Activated T-helper 1 cell treated with anti-CD3 and anti-CD28 coated beads, Interleukin-12 subunit alpha, Interleukin-12 subunit beta, Interleukin-2, Interleukin-4 antibody, amounts not matched to agents 30 ng/mL and 10 ng/mL and 1 ng/mL, durations not matched to agents 14 hours and 24 hours and 36 hours (primary cell): ENCODE measurements at regions of chr15 and their contacts with region 1.

Region 1: DNA sequence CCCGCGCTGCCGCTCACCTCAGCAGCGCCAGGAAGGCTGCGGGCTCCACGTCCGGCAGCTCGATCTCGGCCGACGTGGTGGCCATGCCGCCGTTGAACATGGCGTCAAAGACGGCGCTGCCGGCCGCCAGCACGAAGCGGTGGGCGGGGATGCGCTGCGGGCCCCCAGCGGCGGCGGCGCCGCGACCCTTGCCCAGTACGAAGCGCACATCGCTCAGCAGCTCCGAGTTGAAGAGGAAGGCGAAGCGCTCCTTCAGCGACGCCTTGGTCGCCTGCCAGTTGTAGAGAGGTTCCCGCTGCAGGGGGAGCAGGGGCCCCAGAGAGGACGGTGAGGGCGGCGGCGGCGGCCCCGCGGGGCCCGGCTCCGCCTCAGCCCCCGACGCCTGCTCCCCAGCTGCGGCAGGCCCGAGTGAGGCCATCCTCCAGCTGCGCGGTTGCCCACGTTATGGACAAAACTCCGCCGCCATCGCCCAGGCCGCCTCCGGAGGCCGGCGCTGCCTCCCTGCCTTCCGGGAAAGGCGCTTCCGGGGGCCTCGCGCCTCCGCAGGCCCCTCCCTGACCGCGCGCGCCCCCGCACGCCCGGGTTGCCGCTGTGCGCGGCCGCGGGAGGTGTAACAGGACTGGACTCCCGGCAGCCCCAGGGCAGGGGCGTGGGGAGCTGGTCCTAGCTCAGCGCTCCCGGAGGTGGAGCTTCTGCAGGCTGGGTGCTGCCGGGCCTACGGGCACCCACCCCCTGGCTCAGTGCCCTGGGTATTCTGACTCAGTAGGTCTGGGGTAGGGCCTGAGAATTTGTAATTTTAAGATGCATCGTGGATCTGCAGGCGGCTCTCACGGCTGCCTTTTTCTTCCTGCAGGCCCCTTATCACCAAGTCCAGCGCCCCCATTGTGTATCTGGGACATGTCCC is at the start of gene BTBD1:
- DNase-seq: peak; percentile 84
- H3K4me3 Mint-ChIP-seq: peak within 1 kb of the TSS; percentile 84
- H3K27ac Mint-ChIP-seq: peak within 1 kb of the TSS; percentile 83
- H3K4me1 Mint-ChIP-seq: peaks cover 32% of the 10 kb centered on the region
- H3K27me3 Mint-ChIP-seq: peaks cover 2% of the 10 kb centered on the region
- total RNA-seq, gene BTBD1: 61.7 and 61.8 TPM in 2 replicates

Region 2: GRCh38 chr15:82262422-82263026 is 804.5 kb before region 1 on chr15 and contains the starts of genes EFL1 and SAXO2:
- intact Hi-C with region 1: loop called (anchors 10 kb)
- DNase-seq: peak; percentile 91
- H3K4me3 Mint-ChIP-seq: peak within 1 kb of the TSS; percentile 96
- H3K27ac Mint-ChIP-seq: peak within 1 kb of the TSS; percentile 95
- H3K4me1 Mint-ChIP-seq: peaks cover 27% of the 10 kb centered on the region
- H3K27me3 Mint-ChIP-seq: no peaks in the 10 kb centered on the region
- total RNA-seq, gene EFL1: 25.2 and 25.6 TPM in 2 replicates
- total RNA-seq, gene SAXO2: 0.54 and 0.57 TPM in 2 replicates

Region 3: GRCh38 chr15:83011271-83012075 is 55.5 kb before region 1 on chr15 and contains the start of gene C15orf40:
- intact Hi-C with region 1: loop called (anchors 1 kb)
- DNase-seq: peak; percentile 84
- H3K4me3 Mint-ChIP-seq: peak within 1 kb of the TSS; percentile 99
- H3K27ac Mint-ChIP-seq: peak within 1 kb of the TSS; percentile 98
- H3K4me1 Mint-ChIP-seq: peaks cover 50% of the 10 kb centered on the region
- H3K27me3 Mint-ChIP-seq: no peaks in the 10 kb centered on the region
- total RNA-seq, gene C15orf40: 24.2 and 29.0 TPM in 2 replicates

Region 4: GRCh38 chr15:83030021-83030420 is 37.0 kb before region 1 on chr15:
- intact Hi-C with region 1: no loop called
- DNase-seq: no peak
- H3K4me3 Mint-ChIP-seq: no peak overlapping the region
- H3K27ac Mint-ChIP-seq: no peak overlapping the region
- H3K4me1 Mint-ChIP-seq: no peaks in the 10 kb centered on the region
- H3K27me3 Mint-ChIP-seq: no peaks in the 10 kb centered on the region

Region 5: DNA sequence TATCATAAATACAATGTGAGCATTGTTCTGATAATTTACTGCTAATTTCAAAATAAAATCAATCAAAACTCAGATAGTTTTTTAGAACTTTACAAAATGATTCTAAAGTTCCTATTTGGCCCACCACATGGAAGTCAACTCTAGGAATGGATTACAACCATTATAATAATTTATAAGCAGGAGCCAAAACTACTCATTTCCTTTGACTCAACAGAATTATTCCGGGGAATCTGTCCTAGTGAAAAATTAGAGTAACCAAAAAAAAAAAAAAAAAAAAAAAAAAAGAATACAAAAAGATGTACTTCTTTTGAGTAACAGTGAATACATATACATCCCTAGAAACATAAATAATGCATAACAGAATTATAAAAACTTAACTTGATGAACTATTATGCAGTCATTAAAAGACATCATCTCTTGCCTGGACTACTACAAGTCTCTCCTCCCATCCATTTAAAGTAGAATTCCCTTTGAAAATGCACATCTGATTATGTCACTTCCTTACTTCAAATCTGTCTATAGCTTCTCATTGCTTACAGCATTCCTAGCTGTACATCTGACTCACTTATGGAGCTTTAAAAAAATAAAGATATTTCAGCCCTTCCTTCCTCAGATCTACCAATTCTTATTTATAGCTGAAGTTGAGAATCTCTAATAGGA is 97.3 kb after region 1 on chr15:
- intact Hi-C with region 1: loop called (anchors 1 kb)
- DNase-seq: no peak
- H3K4me3 Mint-ChIP-seq: peak overlapping the region; percentile 66
- H3K27ac Mint-ChIP-seq: peak overlapping the region; percentile 87
- H3K4me1 Mint-ChIP-seq: peaks cover 63% of the 10 kb centered on the region
- H3K27me3 Mint-ChIP-seq: peaks cover 1% of the 10 kb centered on the region

Region 6: GRCh38 chr15:83207622-83208411 is 140.8 kb after region 1 on chr15 and contains the start of gene HDGFL3:
- intact Hi-C with region 1: loop called (anchors 1 kb)
- DNase-seq: peak; percentile 38
- H3K4me3 Mint-ChIP-seq: peak within 1 kb of the TSS; percentile 96
- H3K27ac Mint-ChIP-seq: no peak within 1 kb of the TSS
- H3K4me1 Mint-ChIP-seq: peaks cover 27% of the 10 kb centered on the region
- H3K27me3 Mint-ChIP-seq: peaks cover 11% of the 10 kb centered on the region
- total RNA-seq, gene HDGFL3: 54.7 and 57.5 TPM in 2 replicates